ENCODE measurements at regions of chr14 and their contacts with region 1.

Region 1: GRCh38 chr14:68248481-68249255 is 429.1 kb downstream of the RAD51B start:
- DNase-seq: peak; percentile 47
- CTCF ChIP-seq: peak; percentile 44

Region 2: DNA sequence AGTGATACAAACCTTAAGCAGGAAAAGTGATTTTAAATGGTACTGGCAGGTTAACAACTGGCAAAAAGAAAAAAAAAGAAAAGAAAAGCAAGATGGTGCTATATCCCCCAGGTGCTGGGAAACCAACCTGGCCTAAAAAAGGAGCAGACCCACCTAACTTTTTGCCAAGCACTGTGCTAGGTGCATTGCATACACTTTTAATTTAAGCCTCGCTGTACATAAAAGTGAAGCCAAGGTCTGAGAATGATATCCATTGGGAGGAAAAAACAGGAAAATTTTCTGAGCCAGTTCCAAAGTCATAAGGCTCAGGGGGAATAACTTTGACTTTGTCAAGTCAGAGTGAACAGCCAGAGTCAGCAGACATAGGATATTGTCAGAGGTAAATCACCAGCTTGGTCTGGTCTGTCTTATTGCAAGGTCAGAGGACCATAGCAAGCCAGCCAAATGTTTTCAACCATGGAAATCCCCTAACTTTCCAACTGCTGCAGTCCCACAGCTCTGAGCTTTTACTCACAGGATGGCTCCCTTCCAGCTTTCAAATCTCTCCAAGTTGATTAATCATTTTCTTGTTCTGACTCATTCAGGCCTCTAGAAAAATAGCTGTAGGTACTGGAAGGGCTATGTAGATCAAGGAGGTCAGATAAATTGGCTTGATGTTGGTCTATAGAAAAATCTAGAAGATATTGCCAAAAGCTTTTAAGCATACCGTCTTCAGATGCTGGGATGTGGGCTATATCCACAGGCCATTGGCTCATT is 16.2 kb before region 1 on chr14:
- CTCF ChIA-PET with region 1: interaction called, 26 read pairs
- POLR2A ChIA-PET with region 1: no interaction called
- DNase-seq: peak; percentile 47
- CTCF ChIP-seq: no peak

Region 3: DNA sequence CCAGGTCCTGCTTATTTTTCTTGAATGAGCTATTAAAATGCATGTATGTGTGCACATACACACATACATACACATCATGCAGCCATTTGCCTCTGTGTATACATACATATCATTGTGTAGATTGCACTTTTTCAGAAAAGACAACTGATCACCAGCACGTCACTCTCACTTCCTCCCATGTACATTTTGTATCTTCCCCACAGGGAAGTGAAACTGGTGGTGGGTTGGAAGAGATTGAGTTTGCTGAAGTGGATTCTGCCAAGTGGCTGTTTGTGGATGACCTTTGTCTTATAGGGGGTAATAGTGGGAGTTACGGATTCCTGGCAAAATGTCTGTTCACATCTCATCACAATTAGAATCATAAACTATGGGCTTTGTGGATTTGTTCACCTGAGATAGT is 19.5 kb after region 1 on chr14:
- CTCF ChIA-PET with region 1: interaction called, 25 read pairs
- POLR2A ChIA-PET with region 1: no interaction called
- DNase-seq: peak; percentile 51
- CTCF ChIP-seq: no peak

Region 4: GRCh38 chr14:68404652-68405183 is 156.1 kb after region 1 on chr14:
- CTCF ChIA-PET with region 1: interaction called, 16 read pairs
- POLR2A ChIA-PET with region 1: no interaction called
- DNase-seq: no peak
- CTCF ChIP-seq: no peak

Region 5: DNA sequence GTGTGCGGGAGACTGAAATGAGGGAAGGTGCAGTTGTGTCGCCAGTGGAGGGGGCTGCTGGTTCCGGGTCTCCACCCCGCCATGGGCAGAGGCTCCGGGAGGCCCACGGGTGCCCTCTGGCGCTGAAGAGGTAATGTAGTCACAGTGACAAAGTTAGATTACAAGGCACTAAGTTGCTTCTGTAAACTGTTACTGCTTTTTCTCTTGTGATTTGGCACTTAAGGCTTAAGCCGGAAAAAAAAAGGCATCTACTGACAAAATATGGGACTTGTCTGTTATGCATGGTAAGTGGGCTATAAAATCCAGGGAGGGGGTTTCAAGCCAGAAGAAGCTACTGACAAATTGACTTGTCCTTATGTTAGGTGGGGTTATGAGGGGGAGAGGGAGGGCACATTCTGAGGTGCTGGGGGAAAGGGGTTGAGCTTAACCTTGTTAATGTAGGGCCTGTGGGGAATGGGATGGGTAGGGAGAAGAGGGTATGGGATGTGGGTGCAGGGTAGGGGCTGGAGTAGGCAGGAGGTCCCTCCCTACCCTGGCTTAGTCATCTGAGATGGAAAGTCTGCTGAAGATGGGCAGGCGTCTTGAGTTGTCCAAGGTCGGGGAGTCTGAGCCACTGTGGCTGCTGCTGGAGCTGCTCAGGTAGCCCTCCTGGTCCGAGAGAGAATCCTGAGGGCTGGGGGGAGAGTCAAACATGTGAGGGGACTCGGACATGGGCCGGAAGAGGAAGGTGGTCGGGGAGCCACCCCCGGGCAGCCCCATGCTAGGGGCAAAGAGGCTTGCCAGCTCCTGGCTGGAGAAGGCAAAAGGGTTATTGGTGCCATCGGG is 540.5 kb after region 1 on chr14:
- CTCF ChIA-PET with region 1: interaction called, 61 read pairs
- POLR2A ChIA-PET with region 1: interaction called, 4 read pairs
- DNase-seq: peak; percentile 75
- CTCF ChIP-seq: peak; percentile 84

Region 6: GRCh38 chr14:68824517-68825347 is 576.1 kb after region 1 on chr14:
- CTCF ChIA-PET with region 1: interaction called, 176 read pairs
- POLR2A ChIA-PET with region 1: no interaction called
- DNase-seq: peak; percentile 58
- CTCF ChIP-seq: peak; percentile 91